Spleen (tissue), 13 donors: ENCODE measurements at regions of chr6 and their contacts with region 1.

Region 1: GRCh38 chr6:16183187-16183664 is 54.3 kb downstream of the MYLIP start:
- DNase-seq: no peak
- H3K4me3 ChIP-seq: no peak overlapping the region
- H3K27ac ChIP-seq: no peak overlapping the region
- H3K4me1 ChIP-seq: peaks cover 0 to 23% (median 7%) of the 10 kb centered on the region in 6 donors
- H3K27me3 ChIP-seq: peaks cover 0 to 7% (median 0%) of the 10 kb centered on the region in 7 donors
- CTCF ChIP-seq: peak; percentile 43 to 83 (median 73)
- POLR2A ChIP-seq: no peak

Region 2: DNA sequence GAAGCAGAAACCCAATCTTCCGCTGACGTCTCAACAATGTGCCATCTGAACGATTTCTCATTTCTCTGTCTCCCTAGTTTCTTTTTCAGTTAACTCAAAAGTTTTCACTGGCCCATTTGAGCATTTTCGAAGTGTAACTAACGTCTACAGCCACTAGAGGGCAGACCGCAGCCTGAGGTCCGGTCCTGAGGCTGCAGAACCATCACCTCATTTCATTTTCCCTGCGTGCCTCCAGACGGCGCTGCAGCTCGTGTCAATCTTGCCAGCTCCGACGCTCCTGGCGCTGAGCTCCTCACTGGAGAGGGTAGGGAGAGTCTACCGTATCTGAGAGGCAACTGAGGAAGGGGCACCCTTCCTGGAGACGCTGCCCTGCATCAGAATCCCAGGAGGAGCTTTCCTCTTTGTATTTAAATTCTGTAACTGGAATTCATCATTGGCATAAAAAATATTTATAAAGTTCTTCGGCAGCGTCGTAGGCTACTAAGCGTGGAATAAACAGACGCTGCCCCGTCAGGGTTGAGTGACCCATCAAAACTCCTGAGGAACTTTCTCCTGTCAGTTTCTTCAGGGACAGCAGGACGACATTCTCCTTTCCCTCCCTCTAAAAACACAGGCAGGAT is 491.9 kb before region 1 on chr6:
- intact Hi-C with region 1: loop called (anchors 5 kb)
- DNase-seq: peak; percentile 93
- H3K4me3 ChIP-seq: peak overlapping the region in 3 of 8 donors; percentile 0 to 27 (median 4)
- H3K27ac ChIP-seq: peak overlapping the region in 6 of 8 donors; percentile 24 to 48 (median 38)
- H3K4me1 ChIP-seq: peaks cover 7 to 26% (median 18%) of the 10 kb centered on the region in 6 donors
- H3K27me3 ChIP-seq: peaks cover 0 to 21% (median 0%) of the 10 kb centered on the region in 7 donors
- CTCF ChIP-seq: peak; percentile 95 to 100 (median 98)
- POLR2A ChIP-seq: no peak

Region 3: GRCh38 chr6:15977050-15977449 is 206.2 kb before region 1 on chr6:
- intact Hi-C with region 1: no loop called
- DNase-seq: no peak
- H3K4me3 ChIP-seq: no peak overlapping the region
- H3K27ac ChIP-seq: no peak overlapping the region
- H3K4me1 ChIP-seq: no peaks in the 10 kb centered on the region
- H3K27me3 ChIP-seq: no peaks in the 10 kb centered on the region
- CTCF ChIP-seq: no peak
- POLR2A ChIP-seq: no peak

Region 4: DNA sequence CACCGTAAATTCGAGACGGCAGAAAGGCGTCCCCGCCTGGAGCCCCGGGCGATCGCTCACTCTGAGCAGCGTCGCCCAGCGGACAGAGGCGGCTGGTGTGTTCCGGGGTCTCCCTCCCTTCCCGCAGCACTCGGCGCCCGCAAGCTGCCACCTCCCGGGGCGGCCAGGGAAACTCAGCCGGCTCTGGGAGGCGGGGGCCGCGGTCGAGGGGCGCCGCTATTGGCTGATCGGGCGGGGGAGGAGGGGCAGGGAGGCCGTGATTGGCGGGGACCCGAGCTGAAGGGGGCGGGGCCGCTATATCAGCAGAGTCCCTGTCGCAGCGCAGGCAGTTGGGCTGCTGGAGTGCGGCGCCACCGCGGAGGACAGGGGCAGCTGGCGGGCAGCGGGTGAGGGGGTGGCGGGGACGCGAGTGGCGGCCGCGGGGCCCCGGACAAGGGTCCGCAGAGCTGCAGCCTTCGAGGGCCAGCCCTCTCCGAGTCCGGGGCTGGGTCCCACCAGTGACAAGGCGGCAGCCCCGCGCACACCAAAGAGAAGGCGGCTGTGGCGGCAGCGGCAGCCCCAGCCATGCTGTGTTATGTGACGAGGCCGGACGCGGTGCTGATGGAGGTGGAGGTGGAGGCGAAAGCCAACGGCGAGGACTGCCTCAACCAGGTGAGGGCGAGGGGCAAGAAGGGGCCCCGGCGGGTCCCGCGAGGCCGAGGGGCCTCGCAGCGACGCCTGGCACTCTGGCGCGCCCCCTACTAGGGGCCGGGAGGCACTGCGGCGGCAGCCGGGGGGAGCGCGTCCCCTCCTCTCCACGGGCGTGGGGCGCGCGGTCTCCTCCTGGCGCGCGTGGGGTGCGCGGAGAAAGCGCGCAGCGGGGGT is 54.2 kb before region 1 on chr6 and contains the start of gene MYLIP:
- intact Hi-C with region 1: loop called (anchors 10 kb)
- DNase-seq: peak; percentile 99
- H3K4me3 ChIP-seq: peak within 1 kb of the TSS; percentile 76 to 97 (median 93)
- H3K27ac ChIP-seq: peak within 1 kb of the TSS; percentile 91 to 99 (median 97)
- H3K4me1 ChIP-seq: peaks cover 23 to 56% (median 38%) of the 10 kb centered on the region in 6 donors
- H3K27me3 ChIP-seq: no peaks in the 10 kb centered on the region
- CTCF ChIP-seq: peak; percentile 54 to 96 (median 77)
- POLR2A ChIP-seq: peak; percentile 97 to 99 (median 99)
- total RNA-seq, gene MYLIP: 33.3 to 66.8 (median 50.9) TPM

Region 5: DNA sequence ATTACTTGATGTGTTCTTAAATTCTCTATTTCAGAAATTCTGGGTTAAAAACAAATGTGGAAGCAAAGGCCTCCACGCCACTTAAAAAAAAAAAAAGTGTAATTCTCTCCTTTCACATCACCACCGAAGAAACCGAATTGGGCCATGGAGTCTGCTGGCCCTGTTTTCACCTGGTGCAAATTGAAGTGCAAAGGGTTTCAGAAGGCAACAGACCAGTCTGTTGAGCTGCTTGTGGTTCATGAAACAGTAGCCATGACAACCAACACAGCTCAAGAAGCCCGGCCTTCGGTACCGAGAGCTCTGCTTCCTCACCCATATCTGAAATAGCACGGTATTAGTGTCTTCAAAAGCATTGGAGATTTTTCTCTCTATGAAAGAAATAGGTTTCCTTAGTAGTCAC is 118.3 kb after region 1 on chr6:
- intact Hi-C with region 1: no loop called
- DNase-seq: no peak
- H3K4me3 ChIP-seq: no peak overlapping the region
- H3K27ac ChIP-seq: no peak overlapping the region
- H3K4me1 ChIP-seq: peaks cover 0 to 16% (median 0%) of the 10 kb centered on the region in 6 donors
- H3K27me3 ChIP-seq: no peaks in the 10 kb centered on the region
- CTCF ChIP-seq: no peak
- POLR2A ChIP-seq: no peak